Pancreas (tissue), 10 donors: ENCODE measurements at regions of chr20 and their contacts with region 1.

Region 1: GRCh38 chr20:41339507-41340326 is 904 bp upstream of the LPIN3 start:
- DNase-seq: peak; percentile 90 to 98 (median 95)
- ATAC-seq: peak; percentile 86 to 95 (median 90)
- H3K4me3 ChIP-seq: peak overlapping the region in 3 of 4 donors; percentile 13 to 57 (median 43)
- H3K27ac ChIP-seq: peak overlapping the region; percentile 30 to 84 (median 68)
- H3K4me1 ChIP-seq: peaks cover 0 to 8% (median 0%) of the 10 kb centered on the region in 3 donors
- H3K27me3 ChIP-seq: no peaks in the 10 kb centered on the region
- CTCF ChIP-seq: peak; percentile 96 to 98 (median 98)

Region 2: DNA sequence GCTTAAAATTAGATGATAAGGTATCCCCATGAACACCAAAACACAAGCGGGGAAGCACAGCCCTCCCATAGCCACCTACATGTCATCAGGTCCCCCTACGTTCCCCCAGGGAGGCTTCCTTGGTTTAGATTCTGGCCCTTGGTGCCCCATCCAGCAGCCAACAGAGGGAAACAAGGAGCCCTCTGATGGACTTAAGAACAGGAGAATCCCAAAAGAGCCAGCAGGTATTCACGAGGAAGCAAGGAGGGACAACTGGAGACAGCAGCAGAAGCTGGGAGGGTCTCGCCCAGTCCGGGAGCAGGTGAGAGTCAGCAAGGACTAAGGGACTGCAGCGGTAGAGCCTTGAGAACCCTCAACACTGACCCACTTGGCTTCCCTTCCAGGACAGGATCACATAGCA is 369.5 kb before region 1 on chr20:
- intact Hi-C with region 1: loop called in 1 of 3 experiments (anchors 10 kb)
- DNase-seq: no peak
- ATAC-seq: no peak
- H3K4me3 ChIP-seq: no peak overlapping the region
- H3K27ac ChIP-seq: no peak overlapping the region
- H3K4me1 ChIP-seq: no peaks in the 10 kb centered on the region
- H3K27me3 ChIP-seq: no peaks in the 10 kb centered on the region
- CTCF ChIP-seq: no peak

Region 3: DNA sequence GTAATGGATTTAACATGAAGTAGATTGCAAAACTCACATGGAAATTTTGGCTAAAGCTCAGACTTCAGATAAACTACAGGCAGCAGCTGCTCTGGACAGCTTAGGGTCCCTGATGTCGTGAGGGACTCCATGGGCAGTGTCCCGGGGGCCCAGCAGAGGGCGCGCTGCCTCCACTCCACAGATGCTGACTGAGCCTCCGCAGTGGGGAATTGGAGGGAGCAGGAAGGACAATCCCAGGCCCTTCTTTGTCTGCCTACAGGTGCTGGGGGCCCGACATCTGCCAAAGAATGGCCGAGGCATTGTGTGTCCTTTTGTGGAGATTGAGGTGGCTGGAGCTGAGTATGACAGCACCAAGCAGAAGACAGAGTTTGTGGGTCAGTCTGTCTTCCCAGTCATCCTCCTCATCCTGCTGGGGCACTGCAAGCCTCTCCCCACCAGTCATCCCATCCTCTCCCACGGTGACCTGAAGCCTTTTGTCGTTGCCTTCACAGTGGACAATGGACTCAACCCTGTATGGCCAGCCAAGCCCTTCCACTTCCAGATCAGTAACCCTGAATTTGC is 166.5 kb before region 1 on chr20:
- intact Hi-C with region 1: loop called in 2 of 3 experiments (anchors 5 kb)
- DNase-seq: peak; percentile 68 to 93 (median 85)
- ATAC-seq: peak; percentile 95 to 98 (median 96)
- H3K4me3 ChIP-seq: no peak overlapping the region
- H3K27ac ChIP-seq: no peak overlapping the region
- H3K4me1 ChIP-seq: peaks cover 0 to 5% (median 5%) of the 10 kb centered on the region in 3 donors
- H3K27me3 ChIP-seq: no peaks in the 10 kb centered on the region
- CTCF ChIP-seq: peak; percentile 90 to 94 (median 92)

Region 4: DNA sequence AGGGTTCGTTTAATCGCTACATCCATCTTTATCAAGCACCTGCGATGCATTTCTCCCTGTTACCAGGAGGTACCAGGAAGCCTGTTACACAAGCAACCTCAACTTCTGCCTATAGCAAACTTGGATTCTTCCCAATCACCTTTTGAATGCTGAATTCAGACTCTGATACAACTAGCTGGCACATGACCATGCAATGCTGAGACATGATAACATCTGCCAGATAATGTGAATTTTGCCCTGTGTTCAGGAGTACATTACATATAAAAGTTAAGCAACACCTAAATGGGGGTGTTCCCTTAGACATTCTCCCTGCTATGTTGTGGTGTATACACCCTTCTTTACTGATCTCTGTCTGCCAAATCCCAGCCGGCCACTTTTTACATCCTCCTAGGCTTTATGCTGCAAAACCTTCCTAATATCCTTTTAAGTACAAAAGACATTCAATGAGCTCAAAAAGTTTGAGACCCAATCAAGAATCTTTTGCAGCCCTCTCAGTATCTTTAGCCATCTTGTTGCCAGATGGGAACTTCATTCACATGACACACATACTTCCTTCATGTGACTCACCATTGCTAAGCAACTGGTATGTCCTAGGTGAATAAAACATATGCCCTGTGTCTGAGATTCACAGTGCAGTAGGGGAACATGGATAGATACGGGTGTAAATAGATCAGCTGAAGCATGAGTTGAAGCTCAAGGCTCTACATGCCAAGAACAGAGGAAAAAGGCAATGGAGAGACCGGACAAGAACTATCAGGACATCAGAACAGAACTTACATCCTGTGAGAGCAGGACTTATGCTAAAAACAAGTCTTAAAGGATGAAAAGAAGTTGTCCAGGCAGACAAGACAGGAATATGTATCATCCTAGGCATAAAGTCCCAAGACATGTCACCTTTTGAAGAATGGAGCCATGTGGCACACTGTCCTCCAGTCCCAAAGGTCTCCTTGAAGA is 106.5 kb before region 1 on chr20:
- intact Hi-C with region 1: loop called in 1 of 3 experiments (anchors 10 kb)
- DNase-seq: no peak
- ATAC-seq: peak; percentile 12 to 65 (median 60)
- H3K4me3 ChIP-seq: no peak overlapping the region
- H3K27ac ChIP-seq: no peak overlapping the region
- H3K4me1 ChIP-seq: peaks cover 0 to 6% (median 0%) of the 10 kb centered on the region in 3 donors
- H3K27me3 ChIP-seq: no peaks in the 10 kb centered on the region
- CTCF ChIP-seq: no peak

Region 5: GRCh38 chr20:41572010-41572560 is 232.4 kb after region 1 on chr20:
- intact Hi-C with region 1: no loop called
- DNase-seq: no peak
- ATAC-seq: no peak
- H3K4me3 ChIP-seq: no peak overlapping the region
- H3K27ac ChIP-seq: no peak overlapping the region
- H3K4me1 ChIP-seq: peaks cover 0 to 6% (median 3%) of the 10 kb centered on the region in 3 donors
- H3K27me3 ChIP-seq: no peaks in the 10 kb centered on the region
- CTCF ChIP-seq: no peak